ENCODE measurements at regions of chr11 and their contacts with region 1.

Region 1: DNA sequence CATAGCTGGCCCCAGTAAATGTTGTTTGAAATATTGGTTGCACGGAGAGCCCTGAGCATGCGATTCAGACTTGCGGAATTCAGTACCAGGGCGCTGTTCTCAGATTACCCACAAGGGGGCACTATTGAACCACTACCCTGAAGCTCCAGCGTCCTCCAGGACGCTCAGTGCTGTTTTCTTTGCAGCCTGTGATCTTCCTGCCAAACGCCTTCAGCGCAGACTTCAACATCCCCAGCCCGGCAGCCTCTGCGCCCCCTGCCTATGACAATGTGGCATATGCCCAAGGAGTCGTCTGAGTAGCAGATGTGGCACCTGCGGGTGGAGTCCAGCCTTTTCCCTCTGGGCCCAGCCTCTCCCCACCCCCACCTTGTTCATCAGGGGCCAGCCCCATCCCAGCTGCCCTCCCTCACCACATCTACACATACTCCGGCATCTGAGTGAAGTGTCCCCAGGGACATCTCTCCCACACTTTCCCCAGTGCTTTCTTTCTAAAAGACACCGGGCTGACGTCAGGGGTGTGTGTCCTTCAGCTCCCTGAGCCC is 9.6 kb upstream of the MS4A10 start:
- DNase-seq: peak; percentile 62 to 90 (median 86)
- ATAC-seq: peak; percentile 99
- H3K4me3 ChIP-seq: no peak overlapping the region
- H3K4me3 Mint-ChIP-seq: peak overlapping the region in 3 of 10 donors; percentile 8 to 58 (median 48)
- H3K27ac ChIP-seq: no peak overlapping the region
- H3K27ac Mint-ChIP-seq: peak overlapping the region in 5 of 9 donors; percentile 4 to 78 (median 14)
- H3K4me1 ChIP-seq: no peaks in the 10 kb centered on the region
- H3K4me1 Mint-ChIP-seq: peaks cover 4 to 14% (median 10%) of the 10 kb centered on the region in 7 donors
- H3K27me3 ChIP-seq: no peaks in the 10 kb centered on the region
- H3K27me3 Mint-ChIP-seq: peaks cover 0 to 6% (median 0%) of the 10 kb centered on the region in 5 donors

Region 2: GRCh38 chr11:60887556-60887955 is 112.1 kb after region 1 on chr11:
- CTCF ChIA-PET with region 1: no interaction called
- POLR2A ChIA-PET with region 1: no interaction called
- intact Hi-C with region 1: loop called in 1 of 2 experiments (anchors 1 kb)
- DNase-seq: peak in 2 of 9 donors; percentile 14 to 24
- ATAC-seq: peak; percentile 87
- H3K4me3 ChIP-seq: no peak overlapping the region
- H3K4me3 Mint-ChIP-seq: no peak overlapping the region
- H3K27ac ChIP-seq: no peak overlapping the region
- H3K27ac Mint-ChIP-seq: no peak overlapping the region
- H3K4me1 ChIP-seq: no peaks in the 10 kb centered on the region
- H3K4me1 Mint-ChIP-seq: peaks cover 0 to 9% (median 7%) of the 10 kb centered on the region in 7 donors
- H3K27me3 ChIP-seq: no peaks in the 10 kb centered on the region
- H3K27me3 Mint-ChIP-seq: no peaks in the 10 kb centered on the region